ENCODE measurements at regions of chr4 and their contacts with region 1.

Region 1: GRCh38 chr4:116358588-116359222 is 726.7 kb downstream of the TRAM1L1 start:
- DNase-seq: peak; percentile 73
- H3K4me3 ChIP-seq: no peak overlapping the region
- H3K27ac ChIP-seq: no peak overlapping the region
- H3K4me1 ChIP-seq: no peaks in the 10 kb centered on the region
- H3K27me3 ChIP-seq: no peaks in the 10 kb centered on the region
- CTCF ChIP-seq: peak; percentile 62 to 67
- POLR2A ChIP-seq: no peak

Region 2: GRCh38 chr4:116055857-116056827 is 302.6 kb before region 1 on chr4:
- CTCF ChIA-PET with region 1: no interaction called
- POLR2A ChIA-PET with region 1: no interaction called
- dilution Hi-C with region 1: no loop called
- intact Hi-C with region 1: loop called (anchors 10 kb)
- DNase-seq: peak; percentile 13
- H3K4me3 ChIP-seq: no peak overlapping the region
- H3K27ac ChIP-seq: no peak overlapping the region
- H3K4me1 ChIP-seq: no peaks in the 10 kb centered on the region
- H3K27me3 ChIP-seq: no peaks in the 10 kb centered on the region
- CTCF ChIP-seq: peak in 1 of 2 donors; percentile 4
- POLR2A ChIP-seq: no peak

Region 3: DNA sequence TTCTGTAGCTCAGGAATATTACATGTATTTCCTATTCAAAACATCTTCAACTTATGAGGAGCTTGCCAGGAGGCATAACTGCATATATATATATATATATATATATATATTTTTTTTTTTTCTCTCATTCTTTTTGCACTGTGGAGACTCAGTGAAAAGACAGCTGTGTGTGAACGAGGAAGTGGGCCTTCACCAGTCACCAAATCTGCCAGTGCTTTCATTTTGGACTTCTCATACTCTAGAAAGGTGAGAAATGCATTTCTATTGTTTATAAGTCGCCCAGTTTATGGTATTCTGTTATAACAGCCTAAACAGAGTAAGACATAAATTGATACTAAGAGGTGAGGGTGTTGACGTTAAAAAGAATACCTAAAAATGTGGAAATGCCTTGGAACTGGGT is 16.1 kb after region 1 on chr4:
- CTCF ChIA-PET with region 1: no interaction called
- POLR2A ChIA-PET with region 1: no interaction called
- dilution Hi-C with region 1: no loop called
- intact Hi-C with region 1: no loop called
- DNase-seq: no peak
- H3K4me3 ChIP-seq: no peak overlapping the region
- H3K27ac ChIP-seq: no peak overlapping the region
- H3K4me1 ChIP-seq: no peaks in the 10 kb centered on the region
- H3K27me3 ChIP-seq: no peaks in the 10 kb centered on the region
- CTCF ChIP-seq: no peak
- POLR2A ChIP-seq: no peak

Region 4: DNA sequence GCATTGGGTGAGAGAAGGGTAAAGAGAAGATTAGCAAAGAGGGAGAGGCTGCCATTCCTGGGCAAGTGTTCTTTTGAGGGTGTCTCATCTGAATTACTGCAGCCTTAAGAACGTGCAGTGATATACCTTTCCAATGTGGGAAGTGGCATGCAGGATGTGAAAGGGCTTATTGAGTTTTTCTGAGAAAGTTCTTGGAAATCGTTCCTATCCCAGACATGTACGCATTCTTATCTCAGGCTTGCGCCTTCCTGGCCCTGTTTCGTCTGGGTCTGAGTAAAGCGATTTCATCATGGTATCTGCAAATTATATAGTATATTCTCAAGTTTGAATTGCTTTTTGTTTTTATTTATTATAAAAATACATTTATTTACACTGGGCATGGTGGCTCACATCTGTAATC is 26.9 kb after region 1 on chr4:
- CTCF ChIA-PET with region 1: no interaction called
- POLR2A ChIA-PET with region 1: no interaction called
- dilution Hi-C with region 1: no loop called
- intact Hi-C with region 1: no loop called
- DNase-seq: no peak
- H3K4me3 ChIP-seq: no peak overlapping the region
- H3K27ac ChIP-seq: no peak overlapping the region
- H3K4me1 ChIP-seq: no peaks in the 10 kb centered on the region
- H3K27me3 ChIP-seq: no peaks in the 10 kb centered on the region
- CTCF ChIP-seq: no peak
- POLR2A ChIP-seq: no peak

Region 5: GRCh38 chr4:116668190-116668589 is 309.5 kb after region 1 on chr4:
- CTCF ChIA-PET with region 1: interaction called, 8 read pairs
- POLR2A ChIA-PET with region 1: no interaction called
- dilution Hi-C with region 1: no loop called
- intact Hi-C with region 1: loop called (anchors 1 kb)
- DNase-seq: no peak
- H3K4me3 ChIP-seq: no peak overlapping the region
- H3K27ac ChIP-seq: no peak overlapping the region
- H3K4me1 ChIP-seq: no peaks in the 10 kb centered on the region
- H3K27me3 ChIP-seq: no peaks in the 10 kb centered on the region
- CTCF ChIP-seq: peak in 1 of 2 donors; percentile 34
- POLR2A ChIP-seq: no peak

Region 6: DNA sequence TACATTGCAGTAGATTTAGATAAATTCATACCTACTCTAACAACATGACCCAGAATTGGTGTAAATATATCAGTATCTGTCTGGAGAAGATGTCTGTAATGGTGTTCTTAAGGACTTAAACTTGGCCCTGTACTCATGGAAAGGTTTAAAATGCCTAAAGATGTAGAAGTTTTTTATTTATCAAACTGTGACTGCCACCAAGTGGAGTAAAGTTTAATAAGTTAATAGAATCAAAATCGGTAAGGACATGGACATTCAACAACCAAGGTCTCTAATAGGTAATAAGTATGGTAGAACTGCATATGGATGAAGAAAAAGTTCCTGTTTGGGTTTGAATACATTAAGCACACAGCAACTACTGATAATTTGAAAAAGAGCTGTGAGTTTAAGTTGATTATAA is 1201.6 kb after region 1 on chr4:
- CTCF ChIA-PET with region 1: no interaction called
- POLR2A ChIA-PET with region 1: no interaction called
- dilution Hi-C with region 1: no loop called
- intact Hi-C with region 1: loop called (anchors 1 kb)
- DNase-seq: peak; percentile 11
- H3K4me3 ChIP-seq: no peak overlapping the region
- H3K27ac ChIP-seq: no peak overlapping the region
- H3K4me1 ChIP-seq: no peaks in the 10 kb centered on the region
- H3K27me3 ChIP-seq: no peaks in the 10 kb centered on the region
- CTCF ChIP-seq: no peak
- POLR2A ChIP-seq: no peak

Region 7: GRCh38 chr4:118224239-118224829 is 1865.6 kb after region 1 on chr4:
- CTCF ChIA-PET with region 1: interaction called, 7 read pairs
- POLR2A ChIA-PET with region 1: no interaction called
- dilution Hi-C with region 1: no loop called
- intact Hi-C with region 1: loop called (anchors 1 kb)
- DNase-seq: peak; percentile 69
- H3K4me3 ChIP-seq: no peak overlapping the region
- H3K27ac ChIP-seq: no peak overlapping the region
- H3K4me1 ChIP-seq: no peaks in the 10 kb centered on the region
- H3K27me3 ChIP-seq: peaks cover 0 to 4% of the 10 kb centered on the region in 2 experiments
- CTCF ChIP-seq: peak; percentile 17 to 43
- POLR2A ChIP-seq: no peak